Panc1 (cell line): ENCODE measurements at regions of chr15 and their contacts with region 1.

Region 1: GRCh38 chr15:41116116-41116871 is at the start of gene INO80:
- DNase-seq: peak; percentile 94
- ATAC-seq: peak; percentile 93
- H3K4me3 ChIP-seq: peak within 1 kb of the TSS; percentile 61 to 91
- H3K27ac ChIP-seq: peak within 1 kb of the TSS; percentile 97
- H3K4me1 ChIP-seq: peaks cover 4% of the 10 kb centered on the region; the same call in 1 of the 2 replicates
- H3K27me3 ChIP-seq: no peaks in the 10 kb centered on the region
- CTCF ChIP-seq: no peak
- total RNA-seq, gene INO80: 26.2 TPM

Region 2: GRCh38 chr15:40941528-40942336 is 174.6 kb before region 1 on chr15:
- CTCF ChIA-PET with region 1: interaction called, 10 read pairs
- POLR2A ChIA-PET with region 1: no interaction called
- in situ Hi-C with region 1: no loop called
- intact Hi-C with region 1: no loop called
- DNase-seq: no peak
- ATAC-seq: peak; percentile 91
- H3K4me3 ChIP-seq: peak overlapping the region; percentile 50 to 51
- H3K27ac ChIP-seq: peak overlapping the region; percentile 79
- H3K4me1 ChIP-seq: peaks cover 19% of the 10 kb centered on the region
- H3K27me3 ChIP-seq: no peaks in the 10 kb centered on the region
- CTCF ChIP-seq: peak; percentile 99

Region 3: GRCh38 chr15:41139619-41140018 is 23.3 kb after region 1 on chr15:
- CTCF ChIA-PET with region 1: no interaction called
- POLR2A ChIA-PET with region 1: no interaction called
- in situ Hi-C with region 1: no loop called
- intact Hi-C with region 1: no loop called
- DNase-seq: no peak
- ATAC-seq: no peak
- H3K4me3 ChIP-seq: no peak overlapping the region
- H3K27ac ChIP-seq: no peak overlapping the region
- H3K4me1 ChIP-seq: no peaks in the 10 kb centered on the region
- H3K27me3 ChIP-seq: no peaks in the 10 kb centered on the region
- CTCF ChIP-seq: no peak

Region 4: DNA sequence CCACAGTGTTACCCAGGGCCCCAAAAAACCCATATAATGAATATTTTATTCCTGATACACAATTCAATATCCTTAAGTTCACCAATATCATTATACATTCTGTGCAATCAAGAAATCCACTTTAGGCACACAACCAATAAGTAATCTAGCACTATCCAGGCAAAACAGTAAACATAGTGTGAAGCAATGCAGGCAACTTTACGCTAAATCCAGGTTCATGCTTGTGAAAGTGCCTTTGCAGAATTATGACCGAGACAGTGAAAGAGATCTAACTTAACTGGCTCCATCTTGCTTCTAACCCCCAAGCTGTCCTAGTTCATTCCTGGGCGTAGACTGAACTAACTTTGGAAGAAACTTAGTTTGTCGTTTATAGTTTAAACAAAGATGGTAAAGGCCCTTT is 34.0 kb after region 1 on chr15:
- CTCF ChIA-PET with region 1: no interaction called
- POLR2A ChIA-PET with region 1: interaction called, 23 read pairs
- in situ Hi-C with region 1: no loop called
- intact Hi-C with region 1: no loop called
- DNase-seq: no peak
- ATAC-seq: no peak
- H3K4me3 ChIP-seq: no peak overlapping the region
- H3K27ac ChIP-seq: no peak overlapping the region
- H3K4me1 ChIP-seq: peaks cover 3% of the 10 kb centered on the region; the same call in 1 of the 2 replicates
- H3K27me3 ChIP-seq: no peaks in the 10 kb centered on the region
- CTCF ChIP-seq: no peak